Calu3 (cell line): ENCODE measurements at regions of chr1 and their contacts with region 1.

Region 1: GRCh38 chr1:12596007-12596821 is 21.8 kb downstream of the DHRS3 start:
- DNase-seq: peak; percentile 64
- H3K4me3 Mint-ChIP-seq: peak overlapping the region; percentile 59
- H3K27ac Mint-ChIP-seq: peak overlapping the region; percentile 95
- H3K4me1 Mint-ChIP-seq: peaks cover 73% of the 10 kb centered on the region
- H3K27me3 Mint-ChIP-seq: no peaks in the 10 kb centered on the region
- CTCF ChIP-seq: no peak

Region 2: DNA sequence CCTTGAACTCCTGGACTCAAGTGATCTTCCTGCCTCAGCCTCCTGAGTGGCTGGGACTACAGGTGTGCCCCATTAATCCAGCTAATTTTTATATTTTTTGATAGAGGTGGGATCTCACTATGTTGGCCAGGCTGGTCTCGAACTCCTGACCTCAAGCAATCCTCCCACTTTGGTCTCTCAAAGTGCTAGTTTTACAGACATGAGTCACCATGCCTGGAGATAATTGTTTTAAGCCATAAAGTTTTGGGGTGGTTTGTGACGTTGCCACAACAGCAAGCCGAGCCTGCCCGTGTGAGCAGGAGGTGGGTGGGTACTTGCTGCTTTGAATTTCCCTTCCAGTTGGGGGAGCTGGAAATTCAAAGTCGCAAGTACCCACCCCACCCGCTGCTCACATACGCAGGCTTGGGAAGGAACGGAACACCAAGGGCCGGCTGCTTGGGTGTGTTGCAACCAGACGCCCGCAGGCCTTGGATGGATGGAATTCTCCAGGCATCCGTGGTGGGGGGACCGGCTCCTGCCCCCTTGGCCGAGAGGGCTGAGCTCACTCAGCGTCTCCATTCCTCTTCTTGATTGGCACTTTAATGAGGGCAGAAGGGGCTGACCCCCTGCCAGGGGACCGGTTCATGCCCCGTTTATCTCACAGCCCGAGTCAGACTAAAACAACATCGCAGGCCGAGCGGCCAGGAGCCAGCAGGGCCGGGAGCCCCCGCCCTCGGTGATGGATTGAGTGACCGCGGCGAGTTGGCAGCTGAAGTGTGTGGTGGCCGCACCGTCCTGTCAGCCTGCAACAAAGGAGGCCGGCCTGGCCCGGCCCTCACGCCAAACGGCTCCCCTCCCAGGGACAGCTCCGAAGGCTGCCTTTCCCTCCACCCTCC is 56.3 kb before region 1 on chr1:
- CTCF ChIA-PET with region 1: interaction called, 4 read pairs
- intact Hi-C with region 1: loop called (anchors 2 kb)
- DNase-seq: peak; percentile 78
- H3K4me3 Mint-ChIP-seq: no peak overlapping the region
- H3K27ac Mint-ChIP-seq: peak overlapping the region; percentile 15
- H3K4me1 Mint-ChIP-seq: peaks cover 47% of the 10 kb centered on the region
- H3K27me3 Mint-ChIP-seq: no peaks in the 10 kb centered on the region
- CTCF ChIP-seq: no peak

Region 3: DNA sequence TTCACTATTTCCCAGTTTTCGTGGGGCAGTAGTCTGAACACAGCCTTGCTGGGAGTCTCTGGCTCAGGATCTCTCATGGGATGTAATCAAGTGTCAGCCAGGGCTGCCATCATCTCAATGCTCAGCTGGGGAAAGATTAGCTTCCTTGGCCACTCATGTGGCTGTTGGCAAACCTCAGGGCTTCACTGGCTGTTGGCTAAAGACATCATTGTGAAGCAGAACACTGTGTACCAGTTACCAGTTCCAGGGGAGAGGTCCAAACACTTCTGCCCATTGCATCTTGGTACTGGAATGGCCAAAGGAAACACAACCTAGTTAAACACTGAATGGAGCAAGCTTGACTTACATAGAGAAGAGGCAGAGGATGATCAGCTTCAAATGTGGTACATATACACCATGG is 81.4 kb after region 1 on chr1:
- CTCF ChIA-PET with region 1: no interaction called
- intact Hi-C with region 1: no loop called
- DNase-seq: no peak
- H3K4me3 Mint-ChIP-seq: no peak overlapping the region
- H3K27ac Mint-ChIP-seq: no peak overlapping the region
- H3K4me1 Mint-ChIP-seq: no peaks in the 10 kb centered on the region
- H3K27me3 Mint-ChIP-seq: peaks cover 45% of the 10 kb centered on the region
- CTCF ChIP-seq: no peak